ENCODE measurements at regions of chr2 and their contacts with region 1.

Region 1: DNA sequence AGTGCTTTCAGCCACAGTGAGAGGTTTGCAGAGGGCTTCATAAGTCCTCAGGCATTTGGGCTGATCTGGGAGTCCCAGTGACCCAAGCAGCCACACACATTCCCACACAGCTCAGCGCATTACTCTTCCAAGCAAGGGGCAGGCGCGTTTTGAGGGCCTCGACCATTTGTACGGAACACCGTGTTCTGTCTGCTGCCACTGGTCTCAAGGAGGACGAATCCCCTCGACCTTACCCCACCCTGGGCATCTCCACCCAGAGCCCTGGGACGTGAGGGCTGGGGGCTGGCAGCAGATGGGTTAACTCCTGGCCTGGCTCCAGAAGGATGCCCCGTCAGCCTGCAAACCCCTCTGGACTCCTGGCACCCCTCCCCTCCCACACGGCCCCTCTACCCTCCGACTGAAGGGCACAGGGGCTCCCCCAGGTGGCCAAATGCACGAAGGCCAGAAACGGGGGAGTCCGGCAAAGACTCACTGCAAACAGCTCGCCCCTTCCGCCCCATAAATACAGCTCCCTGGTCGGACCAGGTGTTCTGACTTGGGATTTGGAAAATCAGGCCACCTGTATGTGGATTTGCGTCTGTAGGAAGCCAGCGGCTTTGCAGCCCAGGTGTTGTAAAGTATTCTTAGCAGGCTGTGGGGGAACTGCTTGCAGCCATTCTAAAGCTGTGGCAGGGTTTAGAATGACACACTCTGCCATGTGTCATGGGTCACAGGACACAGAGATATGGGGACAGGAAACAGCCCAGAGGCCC is 33.6 kb upstream of the PTMA start:
- DNase-seq: peak; percentile 76
- ATAC-seq: peak; percentile 71
- H3K4me3 Mint-ChIP-seq: no peak overlapping the region
- H3K27ac Mint-ChIP-seq: peak overlapping the region; percentile 58
- H3K4me1 Mint-ChIP-seq: peaks cover 13% of the 10 kb centered on the region
- H3K27me3 Mint-ChIP-seq: peaks cover 4% of the 10 kb centered on the region

Region 2: GRCh38 chr2:231348173-231348572 is 326.6 kb before region 1 on chr2:
- POLR2A ChIA-PET with region 1: no interaction called
- DNase-seq: no peak
- ATAC-seq: no peak
- H3K4me3 Mint-ChIP-seq: no peak overlapping the region
- H3K27ac Mint-ChIP-seq: no peak overlapping the region
- H3K4me1 Mint-ChIP-seq: peaks cover 1% of the 10 kb centered on the region
- H3K27me3 Mint-ChIP-seq: peaks cover 2% of the 10 kb centered on the region

Region 3: GRCh38 chr2:231662028-231662810 is 12.5 kb before region 1 on chr2:
- POLR2A ChIA-PET with region 1: interaction called, 10 read pairs
- DNase-seq: peak; percentile 100
- ATAC-seq: peak; percentile 94
- H3K4me3 Mint-ChIP-seq: peak overlapping the region; percentile 78
- H3K27ac Mint-ChIP-seq: peak overlapping the region; percentile 92
- H3K4me1 Mint-ChIP-seq: peaks cover 12% of the 10 kb centered on the region
- H3K27me3 Mint-ChIP-seq: no peaks in the 10 kb centered on the region

Region 4: DNA sequence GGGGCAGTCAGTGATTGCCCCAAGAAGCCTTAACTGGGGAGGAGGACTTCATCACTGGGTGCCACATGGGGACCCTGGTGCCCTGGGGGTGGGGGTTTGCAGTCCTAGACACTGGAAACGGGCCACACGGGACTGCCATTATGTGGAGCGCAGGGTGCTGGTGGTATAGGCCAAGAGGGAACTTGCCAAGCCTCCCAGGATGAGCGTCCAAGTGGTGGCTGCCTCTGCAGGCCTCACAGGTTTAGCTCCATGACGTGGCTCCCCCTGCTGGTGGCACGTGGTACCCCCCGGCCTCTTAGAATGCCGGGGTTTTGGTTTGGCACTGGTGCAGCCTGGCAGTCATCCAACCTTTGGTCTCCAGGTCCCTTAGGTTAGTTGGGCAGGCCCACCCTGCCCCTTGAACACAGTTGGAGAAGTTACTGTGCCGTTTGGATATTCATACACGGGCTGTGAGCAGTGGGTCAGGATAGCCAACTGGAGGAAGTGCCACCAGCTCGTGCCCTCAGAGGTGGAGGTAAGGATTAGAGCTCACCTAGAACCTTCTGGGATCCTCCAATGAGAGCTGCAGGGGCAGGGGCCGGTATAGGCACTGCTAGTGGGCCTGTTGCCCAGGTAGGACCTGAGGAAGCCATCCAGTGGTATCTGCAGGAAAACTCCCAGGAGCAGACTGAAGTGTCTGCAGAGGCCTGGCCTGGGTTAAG is 39.1 kb after region 1 on chr2:
- POLR2A ChIA-PET with region 1: interaction called, 42 read pairs
- DNase-seq: peak; percentile 92
- ATAC-seq: peak; percentile 20
- H3K4me3 Mint-ChIP-seq: peak overlapping the region; percentile 57
- H3K27ac Mint-ChIP-seq: peak overlapping the region; percentile 89
- H3K4me1 Mint-ChIP-seq: peaks cover 24% of the 10 kb centered on the region
- H3K27me3 Mint-ChIP-seq: no peaks in the 10 kb centered on the region

Measured in activated naive CD8-positive, alpha-beta T cell treated with anti-CD3 and anti-CD28 coated beads, Interleukin-2, amount 10 ng/mL, durations not matched to agents 7 days and 5 days (primary cell).